Activated CD4-positive, alpha-beta T cell treated with anti-CD3 and anti-CD28 coated beads, Interleukin-2, amount 10 ng/mL, durations not matched to agents 24 days and 14 days (primary cell): ENCODE measurements at regions of chr16 and their contacts with region 1.

Region 1: GRCh38 chr16:23101012-23101550 is 48.2 kb downstream of the USP31 start:
- DNase-seq: no peak
- H3K4me3 Mint-ChIP-seq: no peak overlapping the region
- H3K27ac Mint-ChIP-seq: no peak overlapping the region
- H3K4me1 Mint-ChIP-seq: peaks cover 12% of the 10 kb centered on the region
- H3K27me3 Mint-ChIP-seq: no peaks in the 10 kb centered on the region

Region 2: DNA sequence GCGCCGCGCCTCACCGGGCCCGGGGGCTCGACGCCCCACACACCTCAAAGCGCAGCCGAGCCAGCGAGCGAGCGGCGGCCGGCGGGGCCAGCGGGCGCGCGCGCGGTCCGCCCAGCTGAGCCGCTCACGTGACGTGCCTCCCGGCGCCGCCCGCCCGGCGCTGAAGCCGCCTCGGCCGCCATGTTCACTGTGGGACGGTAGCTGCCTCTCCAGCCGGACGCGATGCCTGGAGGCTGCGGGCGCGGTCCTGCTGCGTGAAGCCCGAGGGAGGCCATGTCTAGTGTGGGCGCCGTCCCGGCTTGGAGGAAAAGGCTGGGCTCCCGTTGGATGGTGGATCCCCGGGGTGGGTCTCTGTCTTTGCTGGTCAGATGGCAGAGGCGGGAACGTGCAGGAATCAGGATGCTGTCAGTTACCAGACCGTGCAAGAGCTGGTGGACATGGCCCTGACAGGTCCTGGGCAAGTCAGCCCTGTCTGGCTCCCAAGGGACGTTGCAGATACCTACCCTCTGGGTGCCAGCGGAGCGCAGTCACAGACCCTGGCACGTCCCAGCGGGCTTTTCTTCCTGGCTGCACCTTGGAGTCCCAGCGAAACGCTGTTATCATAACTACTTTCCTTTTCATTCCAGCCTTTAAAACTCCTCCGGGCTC is 48.4 kb after region 1 on chr16 and contains the start of gene USP31:
- intact Hi-C with region 1: loop called (anchors 2 kb)
- DNase-seq: peak; percentile 97
- H3K4me3 Mint-ChIP-seq: peak within 1 kb of the TSS; percentile 93
- H3K27ac Mint-ChIP-seq: peak within 1 kb of the TSS; percentile 91
- H3K4me1 Mint-ChIP-seq: peaks cover 22% of the 10 kb centered on the region
- H3K27me3 Mint-ChIP-seq: peaks cover 4% of the 10 kb centered on the region
- total RNA-seq, gene USP31: 8.9 and 10.0 TPM in 2 replicates